Psoas muscle (tissue), 8 donors: ENCODE measurements at regions of chr3 and their contacts with region 1.

Region 1: DNA sequence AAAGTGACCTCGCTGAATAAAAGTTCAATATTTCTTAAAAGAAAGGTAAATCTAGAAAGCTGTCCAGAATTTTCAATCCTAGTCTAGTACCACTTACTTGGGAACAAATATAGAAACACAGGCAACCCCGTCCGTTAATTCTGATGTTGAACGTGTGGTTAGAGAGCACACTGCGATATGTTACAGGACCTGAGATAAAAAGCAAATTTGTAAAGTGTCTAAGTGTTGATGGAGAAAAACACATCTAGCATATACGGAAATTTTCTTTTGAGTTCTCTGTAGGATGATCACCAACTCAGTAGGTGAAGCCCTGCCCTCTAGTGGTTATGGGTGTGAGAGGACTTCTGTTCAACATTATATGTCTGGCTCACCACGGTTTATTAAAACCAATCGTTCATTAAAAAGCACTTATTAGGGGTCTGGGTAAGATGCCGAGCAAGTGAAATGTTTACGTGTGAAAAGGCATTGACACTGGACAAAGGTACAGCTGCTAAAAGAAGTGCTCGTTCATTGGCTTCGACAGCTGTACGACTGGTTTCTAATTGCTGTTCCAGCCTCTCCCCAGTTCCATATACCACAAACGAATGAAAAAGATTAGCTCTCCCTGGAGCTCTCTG is 1.0 kb upstream of the ATP2C1 start:
- DNase-seq: peak in 1 of 2 donors; percentile 30
- ATAC-seq: peak; percentile 73 to 83 (median 76)
- H3K4me3 ChIP-seq: peak overlapping the region; percentile 83
- H3K27ac ChIP-seq: peak overlapping the region; percentile 98
- H3K4me1 ChIP-seq: peaks cover 30% of the 10 kb centered on the region
- H3K27me3 ChIP-seq: no peaks in the 10 kb centered on the region
- CTCF ChIP-seq: peak; percentile 87

Region 2: DNA sequence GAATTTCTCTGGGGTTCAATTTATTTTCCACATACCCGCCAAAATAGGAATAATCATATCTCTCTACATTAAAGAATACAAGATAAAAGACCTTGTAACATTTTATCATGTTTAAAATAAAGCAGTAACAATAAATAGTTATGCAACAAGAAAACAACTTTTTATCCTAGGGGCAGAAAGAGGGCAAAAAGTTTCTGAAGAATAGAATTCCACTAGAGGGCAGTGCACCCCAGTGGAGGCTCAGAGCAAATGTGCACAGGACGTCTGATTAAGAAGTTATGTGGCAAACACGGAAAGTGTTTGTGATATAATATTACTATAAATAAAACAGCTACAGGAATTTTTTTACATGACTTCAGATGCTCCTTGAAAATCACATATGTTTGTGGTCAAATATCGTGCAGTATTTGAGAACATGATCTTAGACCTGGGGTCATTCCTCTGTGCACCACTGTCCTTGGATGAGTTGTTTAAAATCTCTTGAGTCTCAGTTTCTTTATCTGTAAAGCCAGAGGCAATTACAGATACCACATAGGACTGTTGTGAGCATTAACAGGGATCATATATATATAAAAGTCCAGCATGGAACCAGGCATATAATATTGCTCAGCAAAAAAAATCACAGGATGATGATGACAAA is 133.0 kb before region 1 on chr3:
- intact Hi-C with region 1: loop called (anchors 1 to 2 kb)
- DNase-seq: peak; percentile 20 to 53
- ATAC-seq: peak; percentile 83 to 98 (median 89)
- H3K4me3 ChIP-seq: no peak overlapping the region
- H3K27ac ChIP-seq: no peak overlapping the region
- H3K4me1 ChIP-seq: no peaks in the 10 kb centered on the region
- H3K27me3 ChIP-seq: no peaks in the 10 kb centered on the region
- CTCF ChIP-seq: peak; percentile 89

Region 3: GRCh38 chr3:130850044-130850797 is 42.6 kb before region 1 on chr3:
- intact Hi-C with region 1: loop called (anchors 2 to 5 kb)
- DNase-seq: no peak
- ATAC-seq: peak; percentile 79 to 87 (median 83)
- H3K4me3 ChIP-seq: peak overlapping the region; percentile 68
- H3K27ac ChIP-seq: peak overlapping the region; percentile 92
- H3K4me1 ChIP-seq: peaks cover 43% of the 10 kb centered on the region
- H3K27me3 ChIP-seq: no peaks in the 10 kb centered on the region
- CTCF ChIP-seq: no peak

Region 4: GRCh38 chr3:130935761-130936492 is 43.1 kb after region 1 on chr3:
- intact Hi-C with region 1: no loop called
- DNase-seq: no peak
- ATAC-seq: no peak
- H3K4me3 ChIP-seq: no peak overlapping the region
- H3K27ac ChIP-seq: no peak overlapping the region
- H3K4me1 ChIP-seq: peaks cover 15% of the 10 kb centered on the region
- H3K27me3 ChIP-seq: no peaks in the 10 kb centered on the region
- CTCF ChIP-seq: no peak

Region 5: DNA sequence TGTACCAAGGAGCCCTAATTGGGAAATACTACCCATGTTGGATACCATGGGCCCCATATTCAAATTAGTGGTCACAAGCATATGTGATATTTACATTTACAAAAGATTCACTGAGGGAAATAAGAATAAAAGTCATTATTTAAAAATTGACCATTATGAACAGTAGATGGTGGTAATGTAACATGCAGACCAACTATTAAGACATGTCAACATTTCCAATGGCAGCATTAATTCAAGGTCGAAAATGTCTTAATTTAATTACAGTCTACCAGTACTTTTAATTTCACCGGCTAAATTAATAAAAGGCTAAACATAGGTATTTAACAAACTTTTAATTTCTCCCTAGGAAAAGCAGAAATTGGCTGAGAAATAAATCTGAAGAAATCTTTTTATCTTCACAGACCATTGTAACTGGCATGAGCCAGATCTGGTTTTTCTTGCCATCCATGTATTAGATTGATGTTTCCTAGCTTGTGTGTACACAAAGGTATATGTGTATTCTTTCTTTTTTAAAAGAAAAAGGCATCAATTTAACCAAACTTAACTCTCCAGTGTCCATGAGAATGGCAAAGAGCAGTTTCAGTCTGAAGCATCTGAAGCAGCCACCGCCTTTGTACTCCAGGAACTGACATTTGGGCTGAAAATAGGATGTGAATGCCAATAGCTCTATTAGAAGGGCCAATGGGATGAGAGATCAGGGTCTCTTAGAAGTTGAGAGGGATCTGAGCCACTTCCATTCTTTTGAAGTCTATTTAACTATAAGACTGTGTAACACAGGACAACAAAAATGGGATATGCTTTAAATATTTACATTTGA is 160.4 kb after region 1 on chr3:
- intact Hi-C with region 1: no loop called
- DNase-seq: no peak
- ATAC-seq: no peak
- H3K4me3 ChIP-seq: no peak overlapping the region
- H3K27ac ChIP-seq: no peak overlapping the region
- H3K4me1 ChIP-seq: no peaks in the 10 kb centered on the region
- H3K27me3 ChIP-seq: no peaks in the 10 kb centered on the region
- CTCF ChIP-seq: peak; percentile 22